GM12878 (cell line): ENCODE measurements at regions of chrX and their contacts with region 1.

Region 1: DNA sequence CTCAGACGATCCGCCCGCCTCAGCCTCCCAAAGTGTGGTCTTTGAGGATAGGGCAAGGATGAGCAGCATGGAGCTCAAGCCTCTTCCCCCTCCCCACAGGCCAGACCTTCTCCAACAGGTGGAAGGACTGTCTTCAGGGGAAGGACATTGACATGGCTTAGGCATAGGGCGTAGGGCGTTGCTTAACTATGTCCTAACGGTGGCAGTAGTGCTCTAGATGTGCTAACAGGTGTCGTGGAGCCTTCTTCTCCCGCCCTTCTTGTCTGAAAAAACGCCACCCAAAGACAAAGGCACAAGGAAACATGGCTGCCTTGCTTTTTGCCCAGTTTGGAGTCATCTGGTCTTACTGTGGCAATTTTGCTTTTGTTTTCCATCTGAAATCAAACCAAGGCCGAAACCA is 219.8 kb downstream of the OR13H1 start:
- DNase-seq: peak; percentile 95
- ATAC-seq: peak; percentile 90
- H3K4me3 ChIP-seq: peak overlapping the region; percentile 51; the same call in 1 of the 2 replicates
- H3K27ac ChIP-seq: peak overlapping the region; percentile 80
- H3K4me1 ChIP-seq: no peaks in the 10 kb centered on the region
- H3K27me3 ChIP-seq: no peaks in the 10 kb centered on the region
- CTCF ChIP-seq: peak; percentile 74 to 83 (median 74)
- EP300 ChIP-seq: peak in 1 of 2 experiments; percentile 24; a peak in 1 of 4 replicates
- POLR2A ChIP-seq: no peak
- RAD21 ChIP-seq: peak; percentile 78

Region 2: GRCh38 chrX:131704136-131704695 is 59.5 kb before region 1 on chrX:
- CTCF ChIA-PET with region 1: interaction called, 5 read pairs
- POLR2A ChIA-PET with region 1: no interaction called
- RAD21 ChIA-PET with region 1: interaction called, 3 read pairs
- SMC1A ChIA-PET with region 1: no interaction called
- in situ Hi-C with region 1: no loop called
- intact Hi-C with region 1: loop called (anchors 1 kb)
- DNase-seq: peak; percentile 87
- ATAC-seq: peak; percentile 85
- H3K4me3 ChIP-seq: peak overlapping the region; percentile 61
- H3K27ac ChIP-seq: peak overlapping the region; percentile 74
- H3K4me1 ChIP-seq: no peaks in the 10 kb centered on the region
- H3K27me3 ChIP-seq: no peaks in the 10 kb centered on the region
- CTCF ChIP-seq: peak; percentile 38 to 67 (median 53); a peak in 5 of 6 replicates
- EP300 ChIP-seq: no peak; a peak in 1 of 4 replicates
- POLR2A ChIP-seq: no peak
- RAD21 ChIP-seq: peak; percentile 69

Region 3: DNA sequence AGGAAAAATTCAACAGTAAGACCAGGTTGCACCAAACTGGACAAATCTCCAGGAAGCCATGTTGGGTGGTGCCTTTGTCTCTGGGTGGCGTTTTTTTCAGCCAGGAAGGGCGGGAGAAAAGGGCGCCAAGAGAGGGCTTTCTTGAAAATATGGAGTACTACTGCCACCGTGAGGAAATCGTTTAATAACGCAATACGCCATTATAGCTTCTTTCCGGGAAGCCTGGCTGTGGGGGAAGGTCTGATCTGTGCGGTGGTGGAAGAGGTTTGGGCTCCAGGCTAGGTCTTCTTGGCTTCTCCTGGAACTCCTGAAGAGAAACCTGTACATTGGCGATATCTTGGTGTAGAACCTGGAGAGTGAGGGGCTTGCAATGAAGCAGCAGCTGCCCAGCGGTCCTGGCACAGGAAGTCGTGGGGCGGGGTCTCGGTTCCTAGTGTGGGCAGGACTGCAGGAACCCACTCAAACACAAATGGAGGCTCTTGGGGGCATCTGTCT is 17.2 kb before region 1 on chrX:
- CTCF ChIA-PET with region 1: interaction called, 12 read pairs
- POLR2A ChIA-PET with region 1: no interaction called
- RAD21 ChIA-PET with region 1: interaction called, 10 read pairs
- SMC1A ChIA-PET with region 1: interaction called, 3 read pairs
- in situ Hi-C with region 1: no loop called
- intact Hi-C with region 1: loop called (anchors 1 kb)
- DNase-seq: peak; percentile 87
- ATAC-seq: peak; percentile 68
- H3K4me3 ChIP-seq: peak overlapping the region; percentile 63
- H3K27ac ChIP-seq: peak overlapping the region; percentile 93
- H3K4me1 ChIP-seq: no peaks in the 10 kb centered on the region
- H3K27me3 ChIP-seq: no peaks in the 10 kb centered on the region
- CTCF ChIP-seq: peak; percentile 28 to 62 (median 41); a peak in 4 of 6 replicates
- EP300 ChIP-seq: no peak; a peak in 1 of 4 replicates
- POLR2A ChIP-seq: no peak
- RAD21 ChIP-seq: peak; percentile 58

Region 4: GRCh38 chrX:131778269-131779218 is 14.9 kb after region 1 on chrX:
- CTCF ChIA-PET with region 1: interaction called, 11 read pairs
- POLR2A ChIA-PET with region 1: interaction called, 3 read pairs
- RAD21 ChIA-PET with region 1: interaction called, 7 read pairs
- SMC1A ChIA-PET with region 1: interaction called, 5 read pairs
- in situ Hi-C with region 1: no loop called
- intact Hi-C with region 1: loop called (anchors 1 kb)
- DNase-seq: peak; percentile 82
- ATAC-seq: peak; percentile 89
- H3K4me3 ChIP-seq: peak overlapping the region; percentile 55; the same call in 1 of the 2 replicates
- H3K27ac ChIP-seq: peak overlapping the region; percentile 90
- H3K4me1 ChIP-seq: peaks cover 5% of the 10 kb centered on the region; the same call in 1 of the 2 replicates
- H3K27me3 ChIP-seq: no peaks in the 10 kb centered on the region; a peak in 1 of 4 replicates
- CTCF ChIP-seq: peak in 2 of 3 experiments; percentile 42 to 61; a peak in 3 of 6 replicates
- EP300 ChIP-seq: no peak
- POLR2A ChIP-seq: no peak
- RAD21 ChIP-seq: peak; percentile 71

Region 5: DNA sequence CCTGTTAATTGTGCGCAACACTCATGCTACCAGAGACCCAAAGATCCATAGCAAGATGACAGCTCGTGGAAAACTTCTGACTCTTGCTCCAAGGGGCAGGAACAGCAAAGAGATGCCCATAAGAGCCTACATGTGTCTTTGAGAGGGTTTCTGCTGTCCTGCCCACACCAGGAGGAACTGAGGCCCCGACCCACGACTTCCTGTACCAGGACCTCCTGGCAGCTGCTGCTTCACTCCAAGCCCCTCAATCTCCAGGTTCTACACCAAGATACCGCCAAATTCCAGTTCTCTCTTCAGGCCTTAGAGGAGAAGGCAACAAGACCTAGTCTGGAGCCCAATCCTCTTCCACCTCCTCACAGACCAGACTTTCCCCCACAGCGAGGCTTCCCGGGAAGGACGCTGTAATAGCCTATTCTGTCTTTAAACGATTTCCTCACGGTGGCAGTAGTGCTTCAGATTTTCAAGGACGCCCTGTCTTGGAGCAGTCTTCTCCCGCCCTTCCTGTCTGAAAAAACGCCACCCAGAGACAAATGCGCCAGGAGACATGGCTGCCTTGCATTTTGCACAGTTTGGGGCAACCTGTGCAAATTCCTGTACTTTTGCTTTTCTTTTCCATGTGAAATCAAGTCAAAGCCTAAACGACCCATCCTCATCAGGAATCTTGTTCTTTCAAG is 29.3 kb after region 1 on chrX:
- CTCF ChIA-PET with region 1: interaction called, 7 read pairs
- POLR2A ChIA-PET with region 1: no interaction called
- RAD21 ChIA-PET with region 1: interaction called, 3 read pairs
- SMC1A ChIA-PET with region 1: interaction called, 5 read pairs
- in situ Hi-C with region 1: no loop called
- intact Hi-C with region 1: loop called (anchors 1 kb)
- DNase-seq: peak; percentile 90
- ATAC-seq: peak; percentile 77
- H3K4me3 ChIP-seq: peak overlapping the region; percentile 52
- H3K27ac ChIP-seq: peak overlapping the region; percentile 91
- H3K4me1 ChIP-seq: no peaks in the 10 kb centered on the region
- H3K27me3 ChIP-seq: no peaks in the 10 kb centered on the region; a peak in 1 of 4 replicates
- CTCF ChIP-seq: peak; percentile 32 to 65 (median 41); a peak in 4 of 6 replicates
- EP300 ChIP-seq: no peak
- POLR2A ChIP-seq: no peak
- RAD21 ChIP-seq: peak; percentile 69